ENCODE measurements at regions of chr19 and their contacts with region 1.

Region 1: DNA sequence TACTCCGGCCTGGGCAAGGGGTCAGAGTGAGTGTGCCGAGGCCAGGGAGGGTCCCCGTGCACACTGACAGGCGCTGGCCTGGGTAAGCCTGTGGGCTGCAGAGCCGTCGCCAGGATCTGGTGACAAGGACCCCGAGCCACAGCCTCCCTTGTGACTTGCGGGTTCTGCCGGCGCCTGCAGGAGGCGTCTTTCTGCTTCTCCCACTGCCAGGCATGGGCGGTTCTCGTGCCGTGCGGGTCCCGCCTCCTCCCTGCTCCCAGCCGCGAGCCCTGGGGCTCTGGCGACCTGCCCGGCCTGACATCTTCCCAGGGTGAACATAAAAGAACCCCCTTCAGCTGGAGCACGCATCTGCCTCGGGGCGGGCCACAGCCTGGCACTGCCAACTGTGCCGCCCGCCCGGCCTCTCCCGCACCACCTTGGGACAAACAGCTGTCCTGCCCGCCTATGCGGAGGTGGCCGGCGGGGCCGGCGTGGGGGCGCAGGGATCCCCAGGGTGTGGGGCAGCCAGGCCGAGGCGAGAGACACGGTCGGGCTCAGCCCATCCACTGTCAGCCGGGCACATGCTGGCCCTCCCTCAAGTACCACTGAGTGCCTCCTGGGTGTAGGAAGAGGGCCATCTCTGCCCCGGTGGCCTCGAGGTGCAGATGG is 1.5 kb upstream of the HCN2 start:
- DNase-seq: peak; percentile 71 to 80 (median 73)
- ATAC-seq: peak; percentile 68
- H3K4me3 ChIP-seq: no peak overlapping the region
- H3K4me1 ChIP-seq: peaks cover 11% of the 10 kb centered on the region
- CTCF ChIP-seq: peak; percentile 39

Region 2: DNA sequence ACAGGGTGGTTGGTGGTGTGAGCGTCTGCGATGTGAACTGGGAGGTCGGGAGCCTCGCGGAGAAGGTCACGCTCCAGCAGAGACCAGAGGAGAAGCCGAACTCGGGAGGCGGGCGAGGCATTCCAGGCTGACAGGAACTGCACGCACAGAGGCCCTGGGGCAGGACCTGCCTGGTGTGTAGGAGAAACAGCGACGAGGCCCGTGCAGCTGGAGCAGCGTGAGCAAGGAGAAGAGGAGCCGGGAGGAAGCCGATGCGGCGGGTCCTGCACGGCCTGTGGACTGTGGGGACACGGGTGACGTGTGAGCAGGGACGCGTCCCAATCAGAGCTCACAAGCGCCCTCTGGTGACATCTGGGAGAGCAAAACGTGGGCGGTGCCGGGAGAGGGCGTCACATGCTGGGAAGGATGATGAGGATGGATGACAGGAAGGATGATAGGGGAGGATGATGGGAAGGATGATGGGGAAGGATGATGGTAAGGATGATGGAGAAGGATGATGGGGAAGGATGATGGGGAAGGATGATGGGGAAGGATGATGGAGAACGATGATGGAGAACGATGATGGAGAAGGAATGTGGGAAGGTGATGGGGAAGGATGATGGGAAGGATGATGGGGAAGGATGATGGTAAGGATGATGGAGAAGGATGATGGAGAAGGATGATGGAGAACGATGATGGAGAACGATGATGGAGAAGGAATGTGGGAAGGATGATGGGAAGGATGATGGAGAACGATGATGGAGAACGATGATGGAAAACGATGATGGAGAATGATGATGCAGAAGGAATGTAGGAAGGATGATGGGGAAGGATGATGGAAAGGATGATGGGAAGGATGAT is 108.0 kb before region 1 on chr19:
- intact Hi-C with region 1: no loop called
- DNase-seq: peak in 2 of 3 donors; percentile 80 to 85
- ATAC-seq: peak; percentile 79
- H3K4me3 ChIP-seq: no peak overlapping the region
- H3K4me1 ChIP-seq: no peaks in the 10 kb centered on the region
- CTCF ChIP-seq: peak; percentile 22

Region 3: DNA sequence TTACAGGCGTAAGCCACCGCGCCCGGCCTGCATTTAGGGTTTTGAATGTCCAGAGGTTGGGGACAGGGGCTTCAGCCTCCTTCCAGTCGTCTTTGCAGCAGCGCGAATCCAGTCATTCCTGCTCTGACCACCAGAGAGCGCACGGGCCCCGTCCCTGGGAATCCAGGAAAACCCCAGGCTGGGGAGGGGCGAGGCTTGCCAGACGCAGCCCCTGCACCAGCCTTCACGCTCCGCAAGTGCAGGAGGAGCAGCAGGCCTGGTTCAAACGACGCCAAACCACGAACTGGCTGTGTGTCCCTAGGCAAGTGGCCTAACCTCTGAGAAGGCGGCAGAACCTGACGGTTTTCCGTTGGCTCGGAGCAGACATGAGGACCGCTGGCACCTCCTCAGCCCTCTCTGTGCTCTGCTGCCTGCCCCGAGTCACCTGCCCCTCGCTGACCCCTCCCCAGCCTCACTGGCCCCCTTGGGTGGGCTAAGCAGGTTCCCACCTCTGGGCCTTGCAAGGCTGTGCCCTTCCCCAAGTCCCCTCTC is 76.8 kb after region 1 on chr19:
- intact Hi-C with region 1: no loop called
- DNase-seq: peak; percentile 82 to 89 (median 88)
- ATAC-seq: peak; percentile 19
- H3K4me3 ChIP-seq: no peak overlapping the region
- H3K4me1 ChIP-seq: peaks cover 22% of the 10 kb centered on the region
- CTCF ChIP-seq: peak; percentile 90

Region 4: GRCh38 chr19:718991-719512 is 130.8 kb after region 1 on chr19:
- intact Hi-C with region 1: no loop called
- DNase-seq: peak in 2 of 3 donors; percentile 41 to 67
- ATAC-seq: peak; percentile 42
- H3K4me3 ChIP-seq: no peak overlapping the region
- H3K4me1 ChIP-seq: no peaks in the 10 kb centered on the region
- CTCF ChIP-seq: no peak

Region 5: GRCh38 chr19:737581-738093 is 149.4 kb after region 1 on chr19:
- intact Hi-C with region 1: loop called in 1 of 2 experiments (anchors 10 kb)
- DNase-seq: peak in 2 of 3 donors; percentile 66 to 80
- ATAC-seq: peak; percentile 53
- H3K4me3 ChIP-seq: no peak overlapping the region
- H3K4me1 ChIP-seq: peaks cover 35% of the 10 kb centered on the region
- CTCF ChIP-seq: peak; percentile 45

Measured in mucosa of descending colon (tissue), 3 donors.